Endothelial cell of umbilical vein (primary cell): ENCODE measurements at regions of chr3 and their contacts with region 1.

Region 1: DNA sequence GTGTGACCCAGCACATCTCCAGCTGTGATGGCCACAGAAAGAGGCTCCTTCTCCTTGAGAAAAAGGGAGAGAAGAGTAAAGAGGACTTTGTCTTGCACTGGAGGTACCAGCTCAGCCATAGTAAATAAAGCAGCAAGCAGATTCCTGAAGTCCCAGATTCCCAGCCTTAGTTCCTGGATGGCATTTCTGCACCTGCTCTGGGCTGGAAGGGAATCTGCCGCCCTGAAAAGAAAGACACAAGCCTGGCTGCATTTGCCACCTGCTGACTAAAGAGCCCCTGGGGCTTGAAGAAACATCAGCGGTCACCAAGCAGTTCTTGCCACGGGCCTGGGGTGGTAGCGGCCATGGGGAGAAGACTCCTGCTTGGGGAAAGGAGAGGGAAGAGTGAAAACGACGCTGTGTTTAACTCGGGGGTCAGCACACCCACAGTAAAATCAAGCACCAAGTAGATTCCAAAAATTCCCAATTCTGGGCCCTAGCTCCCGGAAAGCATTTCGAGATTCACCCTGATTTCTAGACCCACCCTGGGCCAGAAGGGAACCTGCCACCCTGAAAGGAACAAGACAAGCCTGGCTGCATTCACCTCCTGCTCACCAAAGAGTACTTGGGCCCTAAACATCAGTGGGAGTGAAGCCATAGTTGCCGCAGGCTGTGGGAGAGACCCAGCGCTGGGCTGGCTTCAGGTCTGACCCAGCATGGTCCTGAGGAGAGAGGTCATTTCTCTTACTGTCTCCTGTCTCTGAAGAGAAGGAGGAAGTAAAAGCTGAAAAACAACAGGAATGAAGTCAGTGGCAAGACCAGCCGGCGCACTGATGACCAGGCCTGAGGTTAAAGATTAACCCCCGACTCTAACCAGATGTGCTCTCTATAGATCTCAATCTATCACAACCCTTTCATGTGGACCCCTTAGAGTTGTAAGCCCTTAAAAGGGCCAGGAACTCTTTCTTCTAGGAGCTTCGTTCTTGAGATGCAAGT is 24.4 kb upstream of the TNK2 start:
- DNase-seq: no peak
- H3K4me3 ChIP-seq: no peak overlapping the region
- H3K27ac ChIP-seq: no peak overlapping the region
- H3K4me1 ChIP-seq: no peaks in the 10 kb centered on the region
- H3K27me3 ChIP-seq: peaks cover 0 to 19% of the 10 kb centered on the region in 2 experiments
- CTCF ChIP-seq: no peak
- POLR2A ChIP-seq: no peak

Region 2: GRCh38 chr3:195999896-196000295 is 67.2 kb after region 1 on chr3:
- CTCF ChIA-PET with region 1: no interaction called
- POLR2A ChIA-PET with region 1: no interaction called
- dilution Hi-C with region 1: no loop called
- intact Hi-C with region 1: loop called (anchors 10 kb)
- DNase-seq: no peak
- H3K4me3 ChIP-seq: no peak overlapping the region
- H3K27ac ChIP-seq: no peak overlapping the region
- H3K4me1 ChIP-seq: no peaks in the 10 kb centered on the region
- H3K27me3 ChIP-seq: peaks cover 0 to 3% of the 10 kb centered on the region in 2 experiments
- CTCF ChIP-seq: no peak
- POLR2A ChIP-seq: no peak